Heart left ventricle (tissue), 16 donors: ENCODE measurements at regions of chr4 and their contacts with region 1.

Region 1: GRCh38 chr4:163137581-163137980 is 29.1 kb downstream of the NAF1 start:
- DNase-seq: no peak
- ATAC-seq: no peak
- H3K4me3 ChIP-seq: no peak overlapping the region
- H3K27ac ChIP-seq: no peak overlapping the region
- H3K4me1 ChIP-seq: no peaks in the 10 kb centered on the region
- H3K27me3 ChIP-seq: no peaks in the 10 kb centered on the region
- CTCF ChIP-seq: no peak
- POLR2A ChIP-seq: no peak

Region 2: DNA sequence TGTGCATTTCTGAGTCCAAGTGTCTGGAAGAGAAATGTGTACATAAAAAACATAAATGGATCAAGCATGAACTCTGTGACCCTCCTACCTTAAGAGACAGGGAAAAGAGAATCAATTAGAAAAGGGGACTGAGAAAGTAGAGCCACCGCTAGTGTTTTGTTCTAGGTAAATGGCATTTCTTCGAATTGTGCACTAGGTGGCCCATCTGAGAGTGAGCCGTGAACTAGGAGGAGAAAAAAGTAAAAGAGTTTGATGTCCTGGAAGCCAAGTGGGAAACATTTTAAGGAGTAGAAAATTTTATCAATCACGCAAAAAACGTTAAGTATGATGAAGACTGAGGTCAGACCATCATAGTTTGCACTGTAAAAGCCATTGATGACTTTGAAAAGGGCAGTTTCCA is 26.0 kb before region 1 on chr4:
- intact Hi-C with region 1: loop called in 1 of 10 experiments (anchors 1 kb)
- DNase-seq: no peak
- ATAC-seq: no peak
- H3K4me3 ChIP-seq: no peak overlapping the region
- H3K27ac ChIP-seq: no peak overlapping the region
- H3K4me1 ChIP-seq: peaks cover 0 to 8% (median 0%) of the 10 kb centered on the region in 12 donors
- H3K27me3 ChIP-seq: no peaks in the 10 kb centered on the region
- CTCF ChIP-seq: peak in 3 of 12 donors; percentile 9 to 21 (median 9)
- POLR2A ChIP-seq: no peak